ENCODE measurements at regions of chr15 and their contacts with region 1.

Region 1: GRCh38 chr15:37981775-37982174 is 47.3 kb downstream of the TMCO5A start:
- DNase-seq: no peak
- H3K4me3 ChIP-seq: no peak overlapping the region
- CTCF ChIP-seq: peak; percentile 39

Region 2: GRCh38 chr15:37847776-37848175 is 134.0 kb before region 1 on chr15:
- CTCF ChIA-PET with region 1: no interaction called
- POLR2A ChIA-PET with region 1: no interaction called
- DNase-seq: no peak
- H3K4me3 ChIP-seq: no peak overlapping the region
- CTCF ChIP-seq: no peak

Region 3: GRCh38 chr15:38050529-38051448 is 69.0 kb after region 1 on chr15:
- CTCF ChIA-PET with region 1: no interaction called
- POLR2A ChIA-PET with region 1: no interaction called
- DNase-seq: no peak
- H3K4me3 ChIP-seq: no peak overlapping the region
- CTCF ChIP-seq: no peak

Region 4: DNA sequence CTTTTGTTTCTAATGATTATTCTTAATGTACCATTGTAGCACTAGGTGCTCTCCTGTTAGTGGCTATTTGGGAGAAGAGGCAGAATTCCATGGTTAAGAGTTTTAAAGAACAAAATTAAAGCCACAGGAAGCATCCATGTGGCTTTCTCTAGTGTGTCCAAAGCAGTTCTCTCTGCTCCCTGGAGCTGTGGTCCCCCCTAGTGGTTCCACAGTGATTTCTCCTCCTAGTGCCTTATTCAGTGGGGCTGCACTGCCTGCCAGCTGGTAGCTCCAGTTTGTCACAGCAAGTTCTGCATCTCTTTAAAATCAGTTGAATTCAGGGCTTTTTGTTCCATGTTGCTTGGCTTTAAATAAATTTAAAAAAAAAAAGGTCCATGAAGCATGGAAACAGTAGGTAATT is 432.6 kb after region 1 on chr15:
- CTCF ChIA-PET with region 1: interaction called, 10 read pairs
- POLR2A ChIA-PET with region 1: no interaction called
- DNase-seq: peak; percentile 12
- H3K4me3 ChIP-seq: no peak overlapping the region
- CTCF ChIP-seq: peak; percentile 84

Measured in AG04449 (cell line).